Naive thymus-derived CD4-positive, alpha-beta T cell (primary cell): ENCODE measurements at regions of chr3 and their contacts with region 1.

Region 1: GRCh38 chr3:32428092-32429068 is 36.7 kb downstream of the CMTM7 start:
- DNase-seq: peak in 7 of 9 donors; percentile 45 to 58 (median 56)
- ATAC-seq: peak; percentile 73
- H3K4me3 ChIP-seq: peak overlapping the region; percentile 30
- H3K4me3 Mint-ChIP-seq: peak overlapping the region; percentile 60 to 85 (median 81)
- H3K27ac ChIP-seq: peak overlapping the region; percentile 76
- H3K27ac Mint-ChIP-seq: peak overlapping the region; percentile 81 to 100 (median 98)
- H3K4me1 ChIP-seq: peaks cover 83% of the 10 kb centered on the region in 2 donors
- H3K4me1 Mint-ChIP-seq: peaks cover 64 to 100% (median 90%) of the 10 kb centered on the region in 7 donors
- H3K27me3 ChIP-seq: no peaks in the 10 kb centered on the region
- H3K27me3 Mint-ChIP-seq: no peaks in the 10 kb centered on the region

Region 2: GRCh38 chr3:32383136-32383711 is 45.2 kb before region 1 on chr3:
- CTCF ChIA-PET with region 1: no interaction called
- POLR2A ChIA-PET with region 1: no interaction called
- intact Hi-C with region 1: no loop called
- DNase-seq: no peak
- ATAC-seq: no peak
- H3K4me3 ChIP-seq: no peak overlapping the region
- H3K4me3 Mint-ChIP-seq: no peak overlapping the region
- H3K27ac ChIP-seq: no peak overlapping the region
- H3K27ac Mint-ChIP-seq: peak overlapping the region in 1 of 9 donors; percentile 28
- H3K4me1 ChIP-seq: peaks cover 0 to under 1% of the 10 kb centered on the region in 2 donors
- H3K4me1 Mint-ChIP-seq: peaks cover 0 to 10% (median 6%) of the 10 kb centered on the region in 7 donors
- H3K27me3 ChIP-seq: no peaks in the 10 kb centered on the region
- H3K27me3 Mint-ChIP-seq: peaks cover 0 to 5% (median 0%) of the 10 kb centered on the region in 5 donors

Region 3: DNA sequence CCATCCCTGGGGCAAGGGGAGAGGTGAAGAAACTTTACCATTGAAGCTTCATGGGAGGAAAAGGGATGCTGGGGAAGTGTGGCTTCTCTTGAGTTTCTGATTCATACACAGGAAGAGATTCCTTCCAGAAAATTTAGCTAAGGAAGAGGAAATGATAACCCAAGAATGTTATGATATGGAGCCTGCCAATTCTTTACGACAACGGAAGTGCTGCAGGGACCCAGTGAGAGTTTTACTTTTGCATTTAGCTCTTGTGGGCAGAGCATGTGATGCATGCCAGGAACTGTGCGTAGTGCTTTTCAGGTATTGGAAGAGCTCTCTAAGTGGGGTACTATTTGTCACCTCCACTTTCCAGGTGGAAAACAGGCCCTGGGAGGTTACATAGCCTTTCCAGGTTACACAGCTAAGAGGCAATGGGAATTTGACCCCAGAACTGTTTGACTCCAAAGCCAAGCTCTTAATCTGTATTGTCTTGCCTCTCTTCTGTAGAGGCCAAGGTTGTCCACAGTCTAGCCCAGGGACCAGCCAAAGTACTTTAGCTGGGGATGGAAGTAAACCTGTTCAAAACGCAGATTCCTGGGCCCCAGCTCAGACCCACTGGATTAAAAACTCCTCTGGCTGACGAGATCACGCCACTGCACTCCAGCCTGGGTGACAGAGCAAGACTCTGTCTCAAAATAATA is 13.7 kb before region 1 on chr3:
- CTCF ChIA-PET with region 1: interaction called, 23 read pairs
- POLR2A ChIA-PET with region 1: interaction called, 128 read pairs
- intact Hi-C with region 1: loop called (anchors 1 kb)
- DNase-seq: peak in 7 of 9 donors; percentile 61 to 78 (median 69)
- ATAC-seq: peak; percentile 94
- H3K4me3 ChIP-seq: no peak overlapping the region
- H3K4me3 Mint-ChIP-seq: peak overlapping the region; percentile 56 to 78 (median 68)
- H3K27ac ChIP-seq: peak overlapping the region; percentile 81
- H3K27ac Mint-ChIP-seq: peak overlapping the region; percentile 93 to 99 (median 98)
- H3K4me1 ChIP-seq: peaks cover 17 to 65% of the 10 kb centered on the region in 2 donors
- H3K4me1 Mint-ChIP-seq: peaks cover 52 to 96% (median 89%) of the 10 kb centered on the region in 7 donors
- H3K27me3 ChIP-seq: no peaks in the 10 kb centered on the region
- H3K27me3 Mint-ChIP-seq: no peaks in the 10 kb centered on the region

Region 4: DNA sequence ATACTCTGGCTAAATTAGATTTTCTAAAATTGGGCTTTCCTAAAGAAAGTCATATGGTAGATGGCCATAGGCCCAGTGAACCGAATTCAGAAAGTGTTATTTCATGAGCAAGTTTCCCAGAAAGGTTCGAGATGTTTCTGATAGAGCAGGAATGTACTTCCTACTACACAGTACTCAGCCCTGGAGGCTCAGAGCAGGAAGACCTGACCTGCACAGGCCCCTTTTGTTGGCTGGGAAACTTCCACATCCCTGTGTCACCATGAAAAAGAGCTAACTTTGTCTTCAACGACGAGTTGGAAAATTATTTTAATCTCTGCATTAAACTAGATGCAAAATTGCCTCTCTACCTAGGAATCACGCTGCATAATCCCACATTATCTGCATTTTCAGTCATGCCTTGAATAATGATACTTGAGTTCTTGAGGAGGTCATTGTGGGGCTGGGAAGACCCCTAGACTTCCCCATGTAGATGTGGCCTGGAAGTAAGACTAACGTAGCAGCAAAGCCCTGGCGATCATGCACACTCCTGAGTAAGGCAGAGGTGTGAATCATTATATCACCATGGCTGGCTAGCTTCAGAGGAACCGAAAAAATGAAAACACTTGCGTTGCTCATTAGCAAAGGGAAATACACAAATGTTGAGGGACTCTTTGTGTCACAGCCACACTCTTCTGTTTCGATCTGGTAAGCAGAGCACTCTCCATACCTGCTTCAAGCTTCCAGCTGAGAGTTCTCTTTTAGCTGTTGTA is 10.4 kb after region 1 on chr3:
- CTCF ChIA-PET with region 1: interaction called, 10 read pairs
- POLR2A ChIA-PET with region 1: interaction called, 31 read pairs
- intact Hi-C with region 1: loop called (anchors 1 kb)
- DNase-seq: peak in 1 of 9 donors; percentile 24
- ATAC-seq: peak; percentile 65
- H3K4me3 ChIP-seq: no peak overlapping the region
- H3K4me3 Mint-ChIP-seq: peak overlapping the region in 6 of 10 donors; percentile 1 to 80 (median 46)
- H3K27ac ChIP-seq: no peak overlapping the region
- H3K27ac Mint-ChIP-seq: peak overlapping the region; percentile 45 to 87 (median 80)
- H3K4me1 ChIP-seq: peaks cover 42 to 47% of the 10 kb centered on the region in 2 donors
- H3K4me1 Mint-ChIP-seq: peaks cover 29 to 88% (median 78%) of the 10 kb centered on the region in 7 donors
- H3K27me3 ChIP-seq: no peaks in the 10 kb centered on the region
- H3K27me3 Mint-ChIP-seq: no peaks in the 10 kb centered on the region